GM23248 (cell line): ENCODE measurements at regions of chr10 and their contacts with region 1.

Region 1: GRCh38 chr10:18214691-18215563 is 74.7 kb downstream of the CACNB2 start:
- DNase-seq: peak; percentile 76
- H3K4me3 ChIP-seq: no peak overlapping the region
- H3K27ac ChIP-seq: no peak overlapping the region
- H3K4me1 ChIP-seq: no peaks in the 10 kb centered on the region
- H3K27me3 ChIP-seq: no peaks in the 10 kb centered on the region

Region 2: GRCh38 chr10:17859492-17860156 is 355.3 kb before region 1 on chr10:
- in situ Hi-C with region 1: loop called (anchors 5 kb)
- DNase-seq: no peak
- H3K4me3 ChIP-seq: no peak overlapping the region
- H3K27ac ChIP-seq: no peak overlapping the region
- H3K4me1 ChIP-seq: no peaks in the 10 kb centered on the region
- H3K27me3 ChIP-seq: no peaks in the 10 kb centered on the region

Region 3: DNA sequence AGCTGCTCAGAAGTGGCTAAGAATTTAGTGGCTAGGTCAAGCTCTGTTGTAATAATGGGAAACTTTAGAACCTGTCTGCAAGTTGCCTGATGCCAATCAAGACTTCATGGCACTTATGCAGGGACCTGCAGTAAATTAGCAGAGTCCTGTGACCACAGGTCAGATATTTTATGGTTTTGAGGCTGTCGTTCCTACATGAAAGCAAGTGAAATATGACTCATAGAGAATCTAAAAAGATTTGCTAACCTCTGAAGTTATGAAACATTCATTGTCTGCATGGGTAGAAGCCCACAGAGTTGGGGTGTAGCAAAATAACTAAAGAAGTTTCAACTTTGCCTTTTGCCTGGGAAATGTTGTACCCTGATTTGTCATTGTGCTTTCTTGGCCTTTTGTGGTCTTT is 230.9 kb before region 1 on chr10:
- in situ Hi-C with region 1: no loop called
- DNase-seq: peak; percentile 71
- H3K4me3 ChIP-seq: no peak overlapping the region
- H3K27ac ChIP-seq: no peak overlapping the region
- H3K4me1 ChIP-seq: peaks cover 43% of the 10 kb centered on the region
- H3K27me3 ChIP-seq: no peaks in the 10 kb centered on the region